ENCODE measurements at regions of chr1 and their contacts with region 1.

Region 1: GRCh38 chr1:34754964-34755637 is at the start of gene GJB5:
- DNase-seq: no peak
- H3K4me3 ChIP-seq: no peak within 1 kb of the TSS
- H3K27ac ChIP-seq: no peak within 1 kb of the TSS
- H3K27me3 ChIP-seq: no peaks in the 10 kb centered on the region
- CTCF ChIP-seq: no peak
- polyA plus RNA-seq, gene GJB5: not detected in 2 replicates

Region 2: DNA sequence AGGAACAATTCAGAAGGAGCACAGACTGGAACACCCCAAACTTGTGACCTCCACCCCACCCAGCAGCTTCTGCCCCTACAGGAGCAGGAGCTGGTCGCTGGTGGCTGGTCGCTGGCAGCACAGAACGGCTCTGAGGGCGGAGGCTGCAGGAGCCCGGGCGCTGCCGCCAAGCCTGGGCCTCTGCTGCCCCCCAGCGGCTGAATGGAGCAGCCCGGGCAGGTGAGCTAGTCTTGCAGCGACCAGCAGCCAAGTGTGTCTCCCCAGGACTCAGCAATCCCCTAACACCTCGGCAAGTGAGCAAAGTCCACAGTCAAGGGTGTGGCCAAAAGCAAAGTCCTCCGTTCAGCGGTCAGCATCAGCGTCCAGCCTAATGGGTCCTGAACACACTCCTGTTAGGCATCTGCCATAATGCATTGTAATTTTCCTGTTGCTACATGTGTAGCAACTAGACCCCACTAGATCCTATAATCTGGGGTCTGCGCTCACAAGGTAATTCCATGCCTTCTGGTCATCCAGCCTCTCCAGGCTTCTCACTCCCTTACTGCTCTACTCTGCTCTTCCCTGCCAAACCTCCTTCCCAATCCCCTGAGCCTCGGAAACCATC is 12.3 kb before region 1 on chr1:
- CTCF ChIA-PET with region 1: interaction called, 14 read pairs
- POLR2A ChIA-PET with region 1: no interaction called
- DNase-seq: peak; percentile 7
- H3K4me3 ChIP-seq: no peak overlapping the region
- H3K27ac ChIP-seq: no peak overlapping the region
- H3K27me3 ChIP-seq: peaks cover 18% of the 10 kb centered on the region
- CTCF ChIP-seq: peak; percentile 90

Region 3: DNA sequence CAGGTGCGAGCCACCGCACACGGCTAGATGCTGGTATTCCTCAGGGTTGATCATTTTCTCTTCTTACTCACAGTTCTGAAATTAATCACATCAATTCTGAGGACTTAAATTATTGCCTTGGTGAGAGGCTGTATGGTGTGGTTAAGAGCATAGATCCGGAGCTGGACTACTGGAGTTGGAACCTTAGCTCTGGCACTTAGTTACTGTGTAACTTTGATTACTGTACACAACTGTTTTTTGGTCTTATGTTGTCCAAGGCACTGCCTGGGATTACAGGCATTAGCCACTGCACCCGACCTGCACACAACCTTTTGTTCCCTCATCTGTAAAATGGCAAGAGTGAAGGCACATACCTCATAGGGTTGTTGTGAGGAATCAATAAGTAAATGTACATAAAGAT is 1443.5 kb after region 1 on chr1:
- CTCF ChIA-PET with region 1: no interaction called
- POLR2A ChIA-PET with region 1: no interaction called
- DNase-seq: no peak
- H3K4me3 ChIP-seq: no peak overlapping the region
- H3K27ac ChIP-seq: no peak overlapping the region
- H3K27me3 ChIP-seq: no peaks in the 10 kb centered on the region
- CTCF ChIP-seq: no peak

Measured in AG04450 (cell line).